ENCODE measurements at regions of chr5 and their contacts with region 1.

Region 1: GRCh38 chr5:92163906-92164305 is 780.8 kb upstream of the ARRDC3 start:
- DNase-seq: no peak
- H3K4me3 ChIP-seq: no peak overlapping the region
- H3K27ac ChIP-seq: no peak overlapping the region
- H3K4me1 ChIP-seq: no peaks in the 10 kb centered on the region
- H3K27me3 ChIP-seq: no peaks in the 10 kb centered on the region
- CTCF ChIP-seq: no peak
- EP300 ChIP-seq: no peak
- POLR2A ChIP-seq: no peak

Region 2: DNA sequence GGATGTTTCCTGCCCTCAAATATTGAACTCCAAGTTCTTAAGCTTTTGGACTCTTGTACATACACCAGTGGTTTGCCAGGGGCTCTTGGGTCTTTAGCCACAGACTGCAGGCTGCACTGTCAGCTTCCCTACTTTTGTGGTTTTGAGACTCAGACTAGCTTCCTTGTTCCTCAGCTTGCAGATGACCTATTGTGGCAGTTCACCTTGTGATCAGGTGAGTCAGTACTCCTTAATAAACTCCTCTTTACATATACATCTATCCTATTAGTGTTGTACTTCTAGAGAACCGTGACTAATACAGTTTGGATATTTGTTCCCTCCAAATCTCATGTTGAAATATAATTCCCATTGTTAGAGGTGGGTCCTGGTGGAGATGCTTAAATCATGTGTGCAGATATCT is 98.9 kb before region 1 on chr5:
- intact Hi-C with region 1: no loop called
- DNase-seq: no peak
- H3K4me3 ChIP-seq: no peak overlapping the region
- H3K27ac ChIP-seq: no peak overlapping the region
- H3K4me1 ChIP-seq: no peaks in the 10 kb centered on the region
- H3K27me3 ChIP-seq: no peaks in the 10 kb centered on the region
- CTCF ChIP-seq: no peak
- EP300 ChIP-seq: no peak
- POLR2A ChIP-seq: no peak

Region 3: GRCh38 chr5:92177926-92178487 is 14.1 kb after region 1 on chr5:
- intact Hi-C with region 1: loop called (anchors 1 kb)
- DNase-seq: no peak
- H3K4me3 ChIP-seq: no peak overlapping the region
- H3K27ac ChIP-seq: no peak overlapping the region
- H3K4me1 ChIP-seq: no peaks in the 10 kb centered on the region
- H3K27me3 ChIP-seq: no peaks in the 10 kb centered on the region
- CTCF ChIP-seq: no peak
- EP300 ChIP-seq: no peak
- POLR2A ChIP-seq: no peak

Measured in sigmoid colon (tissue), 7 donors.